Sigmoid colon (tissue), 7 donors: ENCODE measurements at regions of chr17 and their contacts with region 1.

Region 1: GRCh38 chr17:15351925-15352324 is 10.5 kb upstream of the TEKT3 start:
- DNase-seq: peak; percentile 82
- H3K4me3 ChIP-seq: no peak overlapping the region
- H3K27ac ChIP-seq: peak overlapping the region; percentile 71 to 91 (median 88)
- H3K4me1 ChIP-seq: peaks cover 0 to 54% (median 34%) of the 10 kb centered on the region in 4 donors
- H3K27me3 ChIP-seq: no peaks in the 10 kb centered on the region
- CTCF ChIP-seq: no peak
- EP300 ChIP-seq: no peak
- POLR2A ChIP-seq: no peak

Region 2: GRCh38 chr17:15307710-15308111 is 44.2 kb before region 1 on chr17:
- intact Hi-C with region 1: loop called (anchors 2 kb)
- DNase-seq: peak; percentile 90
- H3K4me3 ChIP-seq: no peak overlapping the region
- H3K27ac ChIP-seq: peak overlapping the region in 3 of 4 donors; percentile 68 to 78 (median 73)
- H3K4me1 ChIP-seq: peaks cover 3 to 63% (median 55%) of the 10 kb centered on the region in 4 donors
- H3K27me3 ChIP-seq: no peaks in the 10 kb centered on the region
- CTCF ChIP-seq: no peak
- EP300 ChIP-seq: peak; percentile 87 to 95 (median 90)
- POLR2A ChIP-seq: no peak

Region 3: DNA sequence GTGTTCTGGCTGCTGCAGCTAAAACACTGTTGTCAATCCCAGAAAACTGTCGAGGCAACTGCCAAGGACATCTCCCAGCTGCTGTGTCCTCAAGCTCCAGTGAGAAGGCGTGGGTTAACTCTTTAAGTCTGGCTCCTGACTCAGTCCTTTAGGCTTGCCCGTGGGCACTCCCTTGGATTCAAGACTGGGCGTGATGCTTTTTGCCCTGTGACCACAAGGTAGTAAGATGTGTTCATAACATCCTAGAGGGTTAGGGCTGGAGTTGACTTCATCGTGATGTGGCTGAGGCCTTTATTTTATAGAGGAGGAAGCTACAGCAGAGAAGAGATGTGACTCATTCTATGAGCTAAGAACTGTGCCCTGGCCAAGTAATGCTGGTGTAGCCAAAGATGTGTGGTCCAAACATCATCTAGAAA is 40.4 kb after region 1 on chr17:
- intact Hi-C with region 1: loop called (anchors 2 kb)
- DNase-seq: no peak
- H3K4me3 ChIP-seq: no peak overlapping the region
- H3K27ac ChIP-seq: peak overlapping the region; percentile 32 to 61 (median 48)
- H3K4me1 ChIP-seq: peaks cover 0 to 33% (median 22%) of the 10 kb centered on the region in 4 donors
- H3K27me3 ChIP-seq: no peaks in the 10 kb centered on the region
- CTCF ChIP-seq: no peak
- EP300 ChIP-seq: no peak
- POLR2A ChIP-seq: no peak

Region 4: DNA sequence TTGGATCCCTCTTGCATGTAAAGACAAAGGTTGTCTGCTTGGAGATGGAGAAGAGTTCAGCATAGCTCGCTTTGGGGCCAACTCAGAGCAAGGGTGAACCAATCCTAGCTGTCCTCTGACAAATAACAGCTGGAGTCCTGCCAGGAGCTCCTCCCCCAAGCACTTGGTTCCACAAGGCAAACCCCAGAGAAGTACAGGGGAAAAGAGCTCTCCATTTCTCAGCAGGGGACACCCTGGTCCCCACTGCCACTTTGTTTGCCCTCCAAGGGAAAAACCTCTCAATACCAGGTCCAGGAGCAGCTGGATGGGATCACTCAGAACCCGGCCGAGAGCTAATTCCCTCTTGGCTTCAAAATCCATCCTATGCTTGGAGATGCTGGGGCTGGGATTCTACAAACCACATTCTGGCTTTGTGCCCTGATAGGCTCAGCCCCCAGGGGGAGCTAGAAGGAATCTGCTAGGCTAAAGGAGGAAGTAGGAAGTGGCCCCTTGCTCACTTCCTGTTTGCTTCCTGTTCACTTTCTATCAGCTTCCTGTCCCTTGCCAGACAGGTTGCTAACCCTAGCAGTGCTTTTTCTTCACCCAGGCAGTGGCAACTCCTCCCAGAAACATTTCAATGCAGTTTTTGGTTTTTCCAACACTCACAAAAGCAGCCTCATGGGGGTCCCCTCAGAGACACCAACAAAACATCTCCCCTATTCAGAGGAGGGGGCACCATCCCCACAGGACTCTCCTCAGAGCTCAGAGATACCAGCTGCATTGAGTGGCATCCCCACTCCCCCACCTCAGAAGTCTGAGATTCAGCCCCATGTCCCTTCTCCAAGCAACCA is 84.8 kb after region 1 on chr17:
- intact Hi-C with region 1: loop called (anchors 1 kb)
- DNase-seq: peak; percentile 91
- H3K4me3 ChIP-seq: no peak overlapping the region
- H3K27ac ChIP-seq: peak overlapping the region; percentile 30 to 83 (median 52)
- H3K4me1 ChIP-seq: peaks cover 0 to 50% (median 43%) of the 10 kb centered on the region in 4 donors
- H3K27me3 ChIP-seq: no peaks in the 10 kb centered on the region
- CTCF ChIP-seq: no peak
- EP300 ChIP-seq: no peak
- POLR2A ChIP-seq: no peak

Region 5: DNA sequence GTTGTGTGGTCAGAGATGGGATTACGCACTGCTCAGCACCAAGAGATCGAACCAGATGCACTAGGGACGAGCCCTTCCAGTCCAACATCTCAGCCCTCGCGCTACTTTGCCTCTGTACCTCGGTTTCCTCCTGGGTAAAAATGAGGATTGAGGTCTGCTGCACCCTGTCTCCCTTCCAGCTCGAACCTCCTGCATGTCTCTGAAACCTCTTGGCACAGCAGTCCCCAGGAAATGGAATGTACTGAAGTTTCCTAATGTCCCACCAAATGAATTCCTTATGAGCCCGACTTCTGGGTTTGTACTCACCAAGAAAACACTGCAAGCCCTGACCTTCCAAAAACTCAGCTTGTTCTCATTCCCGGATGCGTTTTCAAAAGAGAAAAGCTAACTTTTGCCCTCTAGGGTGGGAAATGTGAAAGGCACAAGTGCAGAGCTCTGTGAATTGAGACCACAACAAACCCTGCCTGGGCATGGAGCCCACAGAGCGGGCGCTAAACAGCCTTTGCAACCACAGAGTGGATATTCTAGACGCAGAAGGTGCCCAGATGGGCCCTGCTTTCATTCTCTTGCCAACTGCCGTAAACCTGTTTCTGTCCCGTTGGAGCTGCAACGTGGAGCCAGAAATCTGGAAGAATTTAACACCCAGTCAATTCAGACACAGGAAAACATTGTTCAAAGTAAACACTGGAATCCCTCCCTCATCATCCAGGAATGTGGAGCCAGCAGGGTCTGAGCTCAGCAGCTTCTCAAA is 105.2 kb after region 1 on chr17:
- intact Hi-C with region 1: loop called (anchors 2 kb)
- DNase-seq: peak; percentile 95
- H3K4me3 ChIP-seq: no peak overlapping the region
- H3K27ac ChIP-seq: peak overlapping the region; percentile 78 to 85 (median 82)
- H3K4me1 ChIP-seq: peaks cover 0 to 50% (median 47%) of the 10 kb centered on the region in 4 donors
- H3K27me3 ChIP-seq: no peaks in the 10 kb centered on the region
- CTCF ChIP-seq: peak; percentile 39 to 56 (median 50)
- EP300 ChIP-seq: peak in 3 of 4 donors; percentile 27 to 66 (median 52)
- POLR2A ChIP-seq: no peak

Region 6: GRCh38 chr17:15502369-15503112 is 150.6 kb after region 1 on chr17:
- intact Hi-C with region 1: loop called (anchors 2 kb)
- DNase-seq: peak; percentile 97
- H3K4me3 ChIP-seq: peak overlapping the region; percentile 21 to 44 (median 41)
- H3K27ac ChIP-seq: peak overlapping the region; percentile 72 to 82 (median 80)
- H3K4me1 ChIP-seq: peaks cover 0 to 19% (median 13%) of the 10 kb centered on the region in 4 donors
- H3K27me3 ChIP-seq: no peaks in the 10 kb centered on the region
- CTCF ChIP-seq: peak; percentile 88 to 89 (median 88)
- EP300 ChIP-seq: peak in 1 of 4 donors; percentile 29
- POLR2A ChIP-seq: no peak

Region 7: GRCh38 chr17:15920758-15921239 is 568.9 kb after region 1 on chr17:
- intact Hi-C with region 1: loop called (anchors 10 kb)
- DNase-seq: peak; percentile 92
- H3K4me3 ChIP-seq: no peak overlapping the region
- H3K27ac ChIP-seq: peak overlapping the region in 3 of 4 donors; percentile 66 to 80 (median 77)
- H3K4me1 ChIP-seq: peaks cover 0 to 55% (median 51%) of the 10 kb centered on the region in 4 donors
- H3K27me3 ChIP-seq: peaks cover 0 to 10% (median 0%) of the 10 kb centered on the region in 3 donors
- CTCF ChIP-seq: no peak
- EP300 ChIP-seq: peak; percentile 41 to 90 (median 72)
- POLR2A ChIP-seq: no peak